ENCODE measurements at regions of chr10 and their contacts with region 1.

Region 1: GRCh38 chr10:12068449-12069269 is at the start of gene DHTKD1:
- DNase-seq: peak; percentile 97 to 100 (median 99)

Region 2: DNA sequence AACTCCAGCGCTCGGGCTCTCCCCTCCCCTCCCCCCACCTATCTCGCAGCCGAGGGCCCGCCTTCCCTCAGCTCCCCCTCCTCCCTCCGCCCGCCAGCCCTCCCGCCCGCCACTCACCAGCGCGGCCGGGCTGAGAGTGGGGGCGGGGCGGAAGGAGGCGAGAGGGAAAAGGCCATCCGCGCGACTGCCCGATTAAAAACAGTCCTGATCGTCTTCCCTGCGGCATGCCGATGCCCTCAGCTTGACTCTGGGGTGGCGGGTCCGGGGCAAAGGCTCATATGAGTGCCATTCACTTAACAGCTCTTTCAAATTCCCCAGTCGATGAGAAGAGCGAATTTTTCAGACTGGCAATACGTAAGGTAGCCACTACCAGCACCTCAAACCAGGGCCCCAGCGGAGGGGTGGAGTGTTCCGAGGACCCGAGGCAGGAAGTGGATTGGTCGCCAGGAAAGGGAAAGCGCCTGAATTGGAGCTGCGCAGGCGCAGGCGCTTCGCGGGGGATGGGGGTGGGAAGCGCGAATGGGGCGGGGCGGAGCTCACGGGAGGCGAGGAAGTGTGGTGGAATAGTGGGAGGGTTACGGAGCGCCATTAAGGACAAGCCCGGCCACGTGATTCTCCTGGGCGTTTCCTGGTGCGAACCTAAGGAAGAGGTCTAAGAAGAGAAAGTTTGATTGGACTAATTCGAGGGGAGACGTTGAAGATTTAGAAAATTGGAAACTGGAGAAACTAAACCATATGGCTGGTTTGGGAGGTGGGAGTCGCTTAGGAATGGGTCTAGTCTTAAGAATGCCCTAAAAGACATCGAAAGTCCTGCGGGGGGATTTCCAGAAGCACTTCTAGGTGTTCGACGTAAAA is 25.6 kb before region 1 on chr10 and contains the start of gene UPF2:
- intact Hi-C with region 1: loop called (anchors 1 kb)
- DNase-seq: peak; percentile 95 to 99 (median 96)

Region 3: GRCh38 chr10:12129222-12130111 is 60.8 kb after region 1 on chr10 and contains the start of gene SEC61A2:
- intact Hi-C with region 1: loop called (anchors 1 kb)
- DNase-seq: peak; percentile 90 to 100 (median 96)

Region 4: DNA sequence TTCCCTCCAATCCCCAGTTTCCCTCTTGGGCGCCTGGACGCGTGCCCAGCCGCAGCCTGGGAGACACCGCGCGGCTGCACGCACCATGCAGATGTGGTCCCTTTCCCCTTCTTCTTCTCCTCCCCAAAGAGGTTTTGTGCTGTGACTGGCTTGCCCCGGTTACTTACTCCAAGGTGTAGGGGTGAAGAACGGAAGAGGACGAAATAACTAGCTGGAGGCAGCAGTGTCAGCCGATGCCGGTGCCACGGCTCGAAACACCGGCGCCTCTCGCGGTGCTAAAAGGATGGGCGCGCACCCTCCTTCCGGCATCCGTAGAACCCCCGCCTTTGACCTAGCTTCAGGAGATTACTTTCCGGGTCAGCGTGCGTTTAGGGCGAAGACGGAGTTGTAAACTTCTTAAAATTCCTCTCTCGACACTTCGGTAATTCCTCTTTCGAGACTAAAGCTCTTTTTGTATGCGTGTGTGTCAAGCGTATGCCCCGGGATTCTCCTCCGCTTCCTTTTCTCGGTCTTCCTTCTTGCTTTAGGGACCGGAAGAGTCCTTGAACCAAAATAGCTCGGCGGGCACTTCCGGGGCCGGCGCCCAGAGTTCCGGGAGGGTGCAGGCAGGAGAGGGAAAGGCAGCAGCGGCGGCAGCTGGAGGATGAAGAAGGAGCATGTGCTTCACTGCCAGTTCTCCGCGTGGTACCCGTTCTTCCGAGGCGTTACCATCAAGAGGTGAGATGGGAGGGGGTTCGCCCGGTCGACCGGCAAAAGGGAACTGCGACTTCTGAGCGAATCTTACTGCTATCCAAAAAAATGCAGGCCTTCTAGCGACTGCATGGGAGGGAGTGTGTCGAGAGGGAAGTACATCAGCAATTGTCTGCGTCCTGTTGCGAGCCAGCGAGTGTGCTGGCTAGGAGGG is 127.2 kb after region 1 on chr10 and contains the starts of genes CDC123 and NUDT5:
- intact Hi-C with region 1: loop called (anchors 10 kb)
- DNase-seq: peak; percentile 83 to 98 (median 87)

Measured in posterior cingulate gyrus (tissue), 11 donors.